Transverse colon (tissue), 4 donors: ENCODE measurements at regions of chr4 and their contacts with region 1.

Region 1: GRCh38 chr4:100311171-100311570 is 120.9 kb upstream of the DDIT4L start:
- DNase-seq: no peak
- H3K4me3 ChIP-seq: no peak overlapping the region
- H3K27ac ChIP-seq: no peak overlapping the region
- H3K4me1 ChIP-seq: no peaks in the 10 kb centered on the region
- H3K27me3 ChIP-seq: no peaks in the 10 kb centered on the region
- CTCF ChIP-seq: no peak
- EP300 ChIP-seq: no peak
- POLR2A ChIP-seq: no peak

Region 2: GRCh38 chr4:100189820-100190642 is 121.1 kb before region 1 on chr4 and contains the start of gene DDIT4L:
- in situ Hi-C with region 1: no loop called
- intact Hi-C with region 1: loop called (anchors 10 kb)
- DNase-seq: peak; percentile 29
- H3K4me3 ChIP-seq: peak within 1 kb of the TSS; percentile 41 to 76 (median 51)
- H3K27ac ChIP-seq: peak within 1 kb of the TSS in 2 of 4 donors; percentile 31 to 41
- H3K4me1 ChIP-seq: peaks cover 0 to 18% (median 15%) of the 10 kb centered on the region in 4 donors
- H3K27me3 ChIP-seq: peaks cover 32% of the 10 kb centered on the region
- CTCF ChIP-seq: no peak
- EP300 ChIP-seq: no peak
- POLR2A ChIP-seq: no peak
- total RNA-seq, gene DDIT4L: 0.79 to 2.0 TPM in 2 of 4 donors, not detected in the others